ENCODE measurements at regions of chr2 and their contacts with region 1.

Region 1: GRCh38 chr2:88627056-88627855 is at the start of gene EIF2AK3:
- DNase-seq: peak; percentile 98
- H3K4me3 Mint-ChIP-seq: peak within 1 kb of the TSS; percentile 91
- H3K27ac Mint-ChIP-seq: peak within 1 kb of the TSS; percentile 93
- H3K4me1 Mint-ChIP-seq: peaks cover 19% of the 10 kb centered on the region
- H3K27me3 Mint-ChIP-seq: no peaks in the 10 kb centered on the region
- total RNA-seq, gene EIF2AK3: 20.2 and 22.8 TPM in 2 replicates

Region 2: GRCh38 chr2:88055371-88056128 is 571.7 kb before region 1 on chr2 and contains the start of gene KRCC1:
- intact Hi-C with region 1: loop called (anchors 10 kb)
- DNase-seq: peak; percentile 98
- H3K4me3 Mint-ChIP-seq: peak within 1 kb of the TSS; percentile 97
- H3K27ac Mint-ChIP-seq: peak within 1 kb of the TSS; percentile 96
- H3K4me1 Mint-ChIP-seq: peaks cover 55% of the 10 kb centered on the region
- H3K27me3 Mint-ChIP-seq: no peaks in the 10 kb centered on the region
- total RNA-seq, gene KRCC1: 16.5 and 16.9 TPM in 2 replicates

Region 3: DNA sequence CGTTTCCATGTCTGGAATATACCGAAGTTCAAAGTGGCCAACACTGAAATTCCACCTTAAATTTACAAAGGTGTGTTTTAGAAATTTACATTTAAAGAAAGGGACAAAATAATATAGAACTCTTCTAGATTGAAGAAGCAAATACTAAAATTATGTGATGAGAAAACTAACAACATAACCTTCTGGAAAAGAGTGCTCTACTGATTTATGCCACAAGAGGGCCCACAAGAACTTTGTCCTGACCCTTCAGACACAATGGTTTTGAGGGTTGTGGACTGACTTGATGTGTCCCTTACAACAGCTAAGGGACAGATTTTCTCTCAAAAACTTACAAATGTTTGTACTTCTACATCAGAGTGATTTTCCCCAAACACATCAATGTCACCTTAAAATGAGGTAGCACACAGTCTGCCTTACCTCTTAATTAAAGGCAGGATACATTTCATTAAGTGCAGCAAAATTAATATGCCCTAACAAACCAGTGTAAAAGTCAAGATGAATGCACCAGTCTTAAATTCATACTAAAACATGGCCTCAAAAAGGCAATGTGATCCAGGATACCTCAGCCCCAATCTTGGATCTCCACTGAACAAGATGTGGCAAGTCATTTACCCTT is 36.1 kb before region 1 on chr2:
- intact Hi-C with region 1: loop called (anchors 5 kb)
- DNase-seq: peak; percentile 87
- H3K4me3 Mint-ChIP-seq: no peak overlapping the region
- H3K27ac Mint-ChIP-seq: peak overlapping the region; percentile 25
- H3K4me1 Mint-ChIP-seq: peaks cover 3% of the 10 kb centered on the region
- H3K27me3 Mint-ChIP-seq: no peaks in the 10 kb centered on the region

Region 4: DNA sequence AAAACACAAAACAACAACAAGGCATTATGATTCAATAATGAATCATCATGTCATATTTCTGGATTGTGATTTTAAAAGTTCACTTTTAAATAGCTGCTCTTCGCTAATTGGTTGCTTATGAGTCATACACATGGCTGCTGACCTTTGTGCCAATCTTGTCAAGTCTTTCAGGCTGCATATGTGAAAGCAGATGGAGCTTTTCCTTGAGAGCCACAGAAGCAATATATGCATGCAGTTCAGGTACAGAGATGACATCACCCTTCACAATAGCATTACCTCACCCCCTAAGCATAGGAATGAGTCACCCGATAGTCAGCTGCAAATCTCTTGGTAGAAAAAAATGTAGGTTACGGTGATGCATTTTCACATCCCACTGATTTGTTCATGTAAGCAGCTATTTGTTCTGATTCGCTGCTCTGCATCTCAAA is 27.2 kb before region 1 on chr2:
- intact Hi-C with region 1: loop called (anchors 1 kb)
- DNase-seq: peak; percentile 86
- H3K4me3 Mint-ChIP-seq: no peak overlapping the region
- H3K27ac Mint-ChIP-seq: peak overlapping the region; percentile 64
- H3K4me1 Mint-ChIP-seq: peaks cover 24% of the 10 kb centered on the region
- H3K27me3 Mint-ChIP-seq: no peaks in the 10 kb centered on the region

Region 5: GRCh38 chr2:88638743-88639142 is 11.5 kb after region 1 on chr2:
- intact Hi-C with region 1: loop called (anchors 1 kb)
- DNase-seq: peak; percentile 76
- H3K4me3 Mint-ChIP-seq: peak overlapping the region; percentile 48
- H3K27ac Mint-ChIP-seq: peak overlapping the region; percentile 86
- H3K4me1 Mint-ChIP-seq: peaks cover 44% of the 10 kb centered on the region
- H3K27me3 Mint-ChIP-seq: no peaks in the 10 kb centered on the region

Region 6: DNA sequence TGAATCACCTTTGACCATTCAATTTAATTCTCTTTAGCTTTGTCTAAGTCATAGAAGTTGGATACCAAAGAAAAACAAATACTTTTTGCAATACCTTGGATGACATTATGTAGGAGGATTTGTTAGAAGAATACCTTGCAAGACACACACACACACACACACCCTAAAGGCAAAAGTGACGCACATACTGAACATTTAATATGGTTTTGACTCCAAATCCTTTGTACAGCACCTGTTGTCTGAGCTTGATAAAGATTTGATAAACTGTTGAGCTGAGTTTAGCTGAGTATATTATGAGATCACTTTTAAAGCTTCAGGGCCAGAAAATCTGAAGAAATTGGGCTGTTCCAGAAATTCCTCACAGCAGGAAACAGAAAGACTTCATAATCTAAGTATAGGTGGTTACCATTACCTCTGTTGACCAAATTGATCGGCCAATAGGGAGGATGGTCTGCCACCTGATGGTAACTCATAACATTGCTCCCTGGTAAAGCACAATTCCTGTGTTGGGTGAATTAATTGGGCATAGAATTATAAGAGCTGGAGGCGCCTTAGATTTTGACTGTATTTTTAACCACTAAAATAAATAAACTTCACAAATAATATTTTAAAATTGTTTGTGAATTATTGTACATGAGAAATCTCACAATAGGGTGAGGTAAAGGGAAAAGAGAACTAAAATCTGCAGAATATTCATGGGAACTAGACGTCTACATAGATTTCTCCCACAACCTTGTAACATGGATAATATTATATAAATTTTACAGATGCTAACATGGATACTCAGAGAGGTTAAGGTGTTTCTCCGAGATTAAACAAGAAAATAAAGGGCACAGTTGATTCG is 42.3 kb after region 1 on chr2:
- intact Hi-C with region 1: loop called (anchors 1 kb)
- DNase-seq: peak; percentile 79
- H3K4me3 Mint-ChIP-seq: no peak overlapping the region
- H3K27ac Mint-ChIP-seq: no peak overlapping the region
- H3K4me1 Mint-ChIP-seq: no peaks in the 10 kb centered on the region
- H3K27me3 Mint-ChIP-seq: peaks cover 3% of the 10 kb centered on the region

Region 7: GRCh38 chr2:88691339-88692183 is 64.3 kb after region 1 on chr2 and contains the start of gene RPIA:
- intact Hi-C with region 1: loop called (anchors 1 kb)
- DNase-seq: peak; percentile 100
- H3K4me3 Mint-ChIP-seq: peak within 1 kb of the TSS; percentile 99
- H3K27ac Mint-ChIP-seq: peak within 1 kb of the TSS; percentile 97
- H3K4me1 Mint-ChIP-seq: peaks cover 45% of the 10 kb centered on the region
- H3K27me3 Mint-ChIP-seq: no peaks in the 10 kb centered on the region
- total RNA-seq, gene RPIA: 80.6 and 86.5 TPM in 2 replicates